Astrocyte of the cerebellum (primary cell): ENCODE measurements at regions of chr2 and their contacts with region 1.

Region 1: DNA sequence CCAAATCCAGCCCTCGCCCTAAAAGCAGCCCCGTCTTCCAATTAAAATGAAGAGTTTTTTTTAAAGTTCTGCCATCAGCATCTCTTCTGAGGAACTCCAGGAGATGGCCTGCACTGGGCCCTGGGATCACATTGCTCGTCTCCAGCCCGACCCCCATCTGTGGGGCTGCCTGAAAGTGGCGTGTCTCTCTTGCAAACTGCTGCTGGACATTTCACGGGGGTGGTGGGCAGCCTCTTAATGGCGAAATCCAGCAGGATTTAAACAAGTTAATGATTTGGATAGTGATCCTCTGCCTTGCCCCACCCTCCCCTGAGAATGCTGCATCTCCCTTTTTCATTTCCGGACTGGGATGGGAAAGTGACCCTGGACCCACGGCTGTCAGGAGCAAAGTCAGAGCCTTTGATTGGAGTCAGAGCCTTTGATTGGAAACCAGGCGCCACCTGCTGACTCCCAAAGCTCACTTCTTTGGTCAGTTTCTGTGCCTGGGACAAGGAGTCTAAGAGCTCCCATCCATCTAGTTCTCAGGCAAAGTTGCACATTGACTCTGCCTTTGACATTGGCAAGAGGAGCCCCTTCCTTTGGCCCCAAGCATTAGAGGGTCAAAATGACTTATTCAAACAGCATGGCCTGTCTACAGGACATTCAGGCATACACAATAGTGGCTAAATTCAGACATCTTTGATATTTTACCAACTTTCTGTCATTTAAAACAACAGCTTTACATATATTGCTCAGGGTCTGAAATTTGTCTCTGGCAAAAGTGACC is 155.2 kb downstream of the SH3BP4 start:
- DNase-seq: peak; percentile 56
- H3K4me3 ChIP-seq: no peak overlapping the region
- CTCF ChIP-seq: peak; percentile 90

Region 2: GRCh38 chr2:234550511-234551107 is 556.4 kb before region 1 on chr2:
- in situ Hi-C with region 1: loop called (anchors 5 kb)
- DNase-seq: peak; percentile 98
- H3K4me3 ChIP-seq: no peak overlapping the region
- CTCF ChIP-seq: peak; percentile 90

Region 3: DNA sequence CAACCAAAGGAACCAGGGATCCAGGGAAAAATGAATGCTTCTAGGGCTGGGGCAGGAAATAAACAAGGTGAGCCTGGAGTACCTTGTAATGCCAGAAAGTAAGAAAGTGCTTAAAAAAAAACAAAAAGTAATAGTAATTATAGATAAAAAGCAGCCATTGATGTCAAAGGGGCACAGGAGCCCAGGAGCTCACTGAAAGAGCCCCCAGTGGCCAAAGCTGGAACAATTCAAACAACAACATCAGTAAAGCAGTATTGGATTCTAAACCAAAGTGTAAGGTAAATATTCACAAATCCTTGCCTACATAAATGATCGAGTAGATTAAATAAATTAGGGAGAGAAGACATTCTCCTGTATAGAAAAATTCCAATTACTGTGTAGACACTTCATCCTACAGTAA is 495.8 kb before region 1 on chr2:
- in situ Hi-C with region 1: no loop called
- DNase-seq: no peak
- H3K4me3 ChIP-seq: no peak overlapping the region
- CTCF ChIP-seq: peak; percentile 39